ENCODE measurements at regions of chr6 and their contacts with region 1.

Region 1: DNA sequence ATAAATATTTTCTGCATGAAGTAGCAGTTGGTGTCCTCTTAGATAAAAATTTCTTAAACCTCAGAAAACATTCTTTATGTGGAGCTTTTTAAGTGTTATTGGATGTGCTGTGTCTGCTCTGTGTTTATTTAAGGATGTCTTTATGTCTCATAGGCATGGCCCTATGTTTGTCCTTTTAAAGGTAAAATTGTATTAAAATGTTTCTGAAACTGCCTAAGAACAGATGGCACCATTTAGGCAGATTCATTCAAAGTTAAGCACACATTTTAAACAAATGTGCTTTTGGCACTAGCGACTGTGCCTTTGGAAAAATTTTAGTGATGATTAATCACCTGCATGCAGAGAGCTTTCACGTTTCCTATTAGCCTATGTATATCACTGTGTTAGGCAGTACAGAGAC is 125.2 kb downstream of the KIF6 start:
- DNase-seq: no peak
- H3K4me3 ChIP-seq: no peak overlapping the region
- H3K27ac ChIP-seq: no peak overlapping the region
- H3K4me1 ChIP-seq: no peaks in the 10 kb centered on the region
- H3K27me3 ChIP-seq: no peaks in the 10 kb centered on the region
- CTCF ChIP-seq: no peak
- EP300 ChIP-seq: no peak
- POLR2A ChIP-seq: no peak

Region 2: DNA sequence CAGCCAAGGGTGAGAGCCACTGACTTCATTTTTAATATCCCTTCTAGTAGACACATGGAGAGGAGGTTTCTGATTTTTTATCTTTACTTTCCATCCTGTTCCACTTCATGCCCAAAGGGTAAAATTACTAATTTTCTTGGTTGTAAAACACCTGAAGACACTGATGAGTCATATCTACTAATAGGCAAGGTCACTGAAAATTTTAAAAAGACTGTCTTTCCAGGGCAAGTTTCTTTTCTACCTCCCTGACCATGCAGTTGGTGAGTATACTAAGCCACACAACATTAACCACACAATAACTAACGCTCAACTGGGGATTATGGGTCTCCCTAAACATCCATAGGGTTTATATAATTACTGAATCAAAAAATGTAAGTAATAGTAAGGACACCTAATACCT is 15.6 kb after region 1 on chr6:
- in situ Hi-C with region 1: no loop called
- intact Hi-C with region 1: loop called (anchors 1 kb)
- DNase-seq: no peak
- H3K4me3 ChIP-seq: no peak overlapping the region
- H3K27ac ChIP-seq: no peak overlapping the region
- H3K4me1 ChIP-seq: no peaks in the 10 kb centered on the region
- H3K27me3 ChIP-seq: no peaks in the 10 kb centered on the region
- CTCF ChIP-seq: no peak
- EP300 ChIP-seq: no peak
- POLR2A ChIP-seq: no peak